Activated CD4-positive, alpha-beta T cell treated with anti-CD3 and anti-CD28 coated beads for 36 hours (primary cell): ENCODE measurements at regions of chr5 and their contacts with region 1.

Region 1: GRCh38 chr5:171476701-171477100 is 57.3 kb downstream of the FGF18 start:
- DNase-seq: no peak
- ATAC-seq: no peak
- H3K4me3 Mint-ChIP-seq: no peak overlapping the region
- H3K27ac Mint-ChIP-seq: no peak overlapping the region
- H3K4me1 Mint-ChIP-seq: peaks cover 8% of the 10 kb centered on the region
- H3K27me3 Mint-ChIP-seq: no peaks in the 10 kb centered on the region

Region 2: DNA sequence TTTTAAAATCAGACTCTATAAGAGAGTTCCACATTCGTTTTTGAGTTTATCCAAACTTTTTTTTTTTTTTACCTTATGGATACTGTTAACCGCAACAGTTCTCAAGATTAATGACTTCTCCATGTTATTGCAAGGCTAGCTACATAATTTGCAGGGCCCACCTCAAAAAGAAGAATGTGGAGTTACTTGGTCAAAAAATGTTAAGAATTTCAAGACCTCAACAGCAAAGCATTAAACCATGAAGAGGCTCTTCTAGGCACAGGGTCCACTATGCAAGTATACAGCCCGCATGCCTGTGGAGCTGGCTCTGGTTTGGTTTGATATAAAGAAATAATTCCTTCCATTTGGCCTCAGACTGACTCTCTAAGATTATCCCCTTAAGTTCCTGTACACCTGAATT is 301.0 kb before region 1 on chr5:
- CTCF ChIA-PET with region 1: no interaction called
- POLR2A ChIA-PET with region 1: interaction called, 13 read pairs
- intact Hi-C with region 1: no loop called
- DNase-seq: no peak
- ATAC-seq: no peak
- H3K4me3 Mint-ChIP-seq: no peak overlapping the region
- H3K27ac Mint-ChIP-seq: no peak overlapping the region
- H3K4me1 Mint-ChIP-seq: no peaks in the 10 kb centered on the region
- H3K27me3 Mint-ChIP-seq: peaks cover 5% of the 10 kb centered on the region